Dendritic cell treated with granulocyte-macrophage colony-stimulating factor and Interleukin-4, amounts not matched to agents 40 ng/mL and 50 ng/mL, for 4 days (primary cell): ENCODE measurements at regions of chrX and their contacts with region 1.

Region 1: DNA sequence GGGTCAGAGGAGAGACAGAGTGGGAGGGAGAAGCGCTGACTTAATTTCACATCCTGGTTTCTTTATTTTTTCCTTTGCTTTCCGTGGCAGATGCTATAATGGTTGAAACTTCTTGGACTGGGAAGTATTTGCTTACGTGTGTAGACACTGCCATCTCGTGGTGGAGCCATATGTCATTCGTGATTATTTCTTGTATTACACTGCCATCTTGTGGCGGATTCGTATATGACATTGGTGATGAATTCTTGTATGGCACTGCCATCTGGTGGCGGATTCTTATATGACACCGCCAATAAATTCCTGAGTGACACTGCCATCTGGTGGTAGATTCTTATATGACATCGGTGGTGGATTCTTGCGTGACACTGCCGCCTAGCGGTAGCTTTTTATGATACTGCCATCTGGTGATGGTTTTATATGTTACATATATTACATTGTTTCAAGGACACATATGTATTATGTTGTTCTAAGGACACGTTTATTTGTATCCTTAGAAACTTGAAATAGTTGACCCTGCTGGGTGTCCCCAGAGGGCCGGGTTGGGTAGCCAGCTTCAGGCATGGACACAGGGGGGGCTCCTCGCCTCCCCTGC is 37.3 kb upstream of the CLCN4 start:
- H3K4me3 Mint-ChIP-seq: no peak overlapping the region
- H3K27ac Mint-ChIP-seq: peak overlapping the region; percentile 51
- H3K4me1 Mint-ChIP-seq: peaks cover 54% of the 10 kb centered on the region
- H3K27me3 Mint-ChIP-seq: no peaks in the 10 kb centered on the region

Region 2: DNA sequence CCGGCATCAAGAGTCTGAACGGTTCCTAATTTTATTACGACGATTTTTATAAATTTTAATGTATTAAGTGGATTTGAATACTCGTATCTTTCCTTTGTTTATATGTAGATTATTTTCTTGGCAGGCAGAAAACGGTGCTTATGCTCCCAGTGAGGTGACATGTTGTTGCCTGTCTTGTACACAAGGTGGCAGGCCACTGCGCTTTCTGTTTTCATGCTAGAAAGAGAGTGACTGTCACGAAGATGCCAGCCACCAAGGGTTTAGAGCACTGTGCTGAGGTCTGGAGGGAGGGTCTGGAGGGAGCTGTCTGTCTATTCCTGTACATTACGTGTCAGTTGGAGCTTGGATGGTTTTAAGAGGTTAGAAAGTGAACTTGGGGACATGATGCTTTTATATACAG is 245.5 kb before region 1 on chrX:
- intact Hi-C with region 1: loop called (anchors 2 kb)
- H3K4me3 Mint-ChIP-seq: no peak overlapping the region
- H3K27ac Mint-ChIP-seq: no peak overlapping the region
- H3K4me1 Mint-ChIP-seq: peaks cover 5% of the 10 kb centered on the region
- H3K27me3 Mint-ChIP-seq: peaks cover 24% of the 10 kb centered on the region

Region 3: DNA sequence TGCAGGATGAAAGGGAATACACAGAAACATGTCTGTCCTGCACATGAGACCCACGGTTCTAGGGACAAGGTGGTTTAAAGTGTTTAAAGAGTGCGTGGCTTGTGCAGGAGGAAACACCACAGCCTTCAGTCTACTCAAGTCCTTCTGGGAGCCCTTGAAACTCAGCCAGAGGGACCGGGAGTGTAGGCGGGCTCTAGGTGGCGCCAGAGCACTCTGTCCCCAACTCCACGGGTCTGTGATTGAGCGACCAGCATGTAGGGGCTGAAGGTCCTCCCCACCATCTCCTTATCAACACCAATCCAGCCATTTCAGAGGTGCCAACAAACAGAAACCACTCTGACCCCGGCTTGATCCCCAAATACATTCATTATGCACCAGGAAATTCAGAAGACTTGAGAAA is 234.3 kb before region 1 on chrX:
- intact Hi-C with region 1: loop called (anchors 1 kb)
- H3K4me3 Mint-ChIP-seq: no peak overlapping the region
- H3K27ac Mint-ChIP-seq: no peak overlapping the region
- H3K4me1 Mint-ChIP-seq: peaks cover 29% of the 10 kb centered on the region
- H3K27me3 Mint-ChIP-seq: peaks cover 12% of the 10 kb centered on the region

Region 4: GRCh38 chrX:9995855-9996339 is 123.6 kb before region 1 on chrX:
- intact Hi-C with region 1: loop called (anchors 1 kb)
- H3K4me3 Mint-ChIP-seq: no peak overlapping the region
- H3K27ac Mint-ChIP-seq: no peak overlapping the region
- H3K4me1 Mint-ChIP-seq: no peaks in the 10 kb centered on the region
- H3K27me3 Mint-ChIP-seq: peaks cover 1% of the 10 kb centered on the region

Region 5: GRCh38 chrX:10166731-10167151 is 47.2 kb after region 1 on chrX:
- intact Hi-C with region 1: loop called (anchors 5 kb)
- H3K4me3 Mint-ChIP-seq: no peak overlapping the region
- H3K27ac Mint-ChIP-seq: peak overlapping the region; percentile 82
- H3K4me1 Mint-ChIP-seq: peaks cover 61% of the 10 kb centered on the region
- H3K27me3 Mint-ChIP-seq: peaks cover 4% of the 10 kb centered on the region

Region 6: DNA sequence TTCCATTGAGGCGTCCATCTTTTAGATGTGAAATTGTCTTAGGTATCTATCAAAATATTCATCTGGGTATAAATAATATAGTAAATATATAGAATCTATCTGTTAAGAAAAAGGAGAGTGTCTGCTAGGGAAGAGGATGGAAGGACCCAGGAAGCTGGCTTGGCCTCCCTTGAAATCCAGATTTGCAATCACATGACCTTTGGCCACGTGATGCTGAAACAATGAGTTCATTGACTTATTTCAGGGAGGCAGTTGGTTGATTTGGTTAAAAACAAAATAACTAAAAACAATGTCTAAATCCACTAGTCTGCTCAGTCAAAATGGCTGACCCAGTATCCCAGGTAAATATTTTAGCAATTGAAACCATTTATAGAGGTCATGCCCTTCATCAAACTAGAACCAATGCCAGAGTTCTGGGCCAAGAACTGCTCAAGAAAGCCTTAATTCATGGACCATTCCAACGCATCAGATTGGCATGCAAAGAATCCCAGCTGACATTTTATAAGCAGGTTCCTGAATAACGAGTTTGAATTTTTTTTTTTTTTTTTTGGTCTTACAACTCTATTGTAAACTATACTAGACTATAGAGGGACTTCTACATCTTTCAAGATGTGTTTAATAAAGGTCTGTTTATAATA is 328.2 kb after region 1 on chrX:
- intact Hi-C with region 1: no loop called
- H3K4me3 Mint-ChIP-seq: no peak overlapping the region
- H3K27ac Mint-ChIP-seq: no peak overlapping the region
- H3K4me1 Mint-ChIP-seq: no peaks in the 10 kb centered on the region
- H3K27me3 Mint-ChIP-seq: no peaks in the 10 kb centered on the region